HepG2 (cell line): ENCODE measurements at regions of chr9 and their contacts with region 1.

Region 1: DNA sequence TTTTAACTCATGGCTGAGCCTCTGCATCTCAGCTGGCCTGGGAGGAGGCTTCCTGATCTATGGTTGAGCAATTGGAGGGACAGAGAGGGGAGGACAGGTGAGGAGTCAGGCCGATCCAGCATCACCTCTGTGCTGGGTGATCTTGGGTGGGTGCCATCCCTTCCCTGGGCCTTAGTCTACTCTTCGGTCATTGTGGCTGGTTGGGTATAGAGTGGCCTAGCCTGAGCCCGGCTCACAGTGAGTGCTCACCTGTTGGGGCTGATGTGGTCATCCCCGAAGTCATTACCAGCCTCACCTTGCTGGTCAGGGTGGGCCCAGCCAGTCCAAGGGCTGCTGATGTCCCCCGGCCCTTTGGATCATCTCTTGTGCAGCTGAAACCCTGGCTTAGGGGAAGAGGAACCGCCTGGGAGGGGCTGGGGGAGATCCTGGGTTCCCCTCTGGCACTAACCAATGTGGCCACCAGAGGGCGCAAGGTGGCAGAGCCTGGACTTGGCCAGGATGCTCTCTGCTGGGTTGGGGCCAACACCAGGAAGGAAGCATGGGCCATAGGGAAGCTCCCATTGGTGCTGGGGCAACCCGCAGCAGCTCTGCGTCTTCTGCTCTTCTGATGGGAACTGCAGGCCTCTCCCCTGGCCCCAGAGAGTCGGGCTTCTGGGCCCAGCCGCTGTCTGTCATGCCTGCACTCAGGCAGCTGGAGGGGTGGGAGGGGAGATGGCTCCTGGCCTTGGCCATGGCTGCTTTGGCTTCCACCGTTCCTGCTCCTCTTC is 17.3 kb upstream of the ODF2 start:
- DNase-seq: peak; percentile 68
- ATAC-seq: peak; percentile 96
- H3K4me3 ChIP-seq: peak overlapping the region in 1 of 3 experiments; percentile 45; a peak in 1 of 6 replicates
- H3K27ac ChIP-seq: no peak overlapping the region
- H3K4me1 ChIP-seq: peaks cover 9% of the 10 kb centered on the region; the same call in 1 of the 2 replicates
- H3K27me3 ChIP-seq: peaks cover 0 to 6% of the 10 kb centered on the region in 2 experiments; a peak in 2 of 5 replicates
- CTCF ChIP-seq: peak; percentile 97
- EP300 ChIP-seq: no peak
- POLR2A ChIP-seq: no peak
- RAD21 ChIP-seq: peak; percentile 80

Region 2: DNA sequence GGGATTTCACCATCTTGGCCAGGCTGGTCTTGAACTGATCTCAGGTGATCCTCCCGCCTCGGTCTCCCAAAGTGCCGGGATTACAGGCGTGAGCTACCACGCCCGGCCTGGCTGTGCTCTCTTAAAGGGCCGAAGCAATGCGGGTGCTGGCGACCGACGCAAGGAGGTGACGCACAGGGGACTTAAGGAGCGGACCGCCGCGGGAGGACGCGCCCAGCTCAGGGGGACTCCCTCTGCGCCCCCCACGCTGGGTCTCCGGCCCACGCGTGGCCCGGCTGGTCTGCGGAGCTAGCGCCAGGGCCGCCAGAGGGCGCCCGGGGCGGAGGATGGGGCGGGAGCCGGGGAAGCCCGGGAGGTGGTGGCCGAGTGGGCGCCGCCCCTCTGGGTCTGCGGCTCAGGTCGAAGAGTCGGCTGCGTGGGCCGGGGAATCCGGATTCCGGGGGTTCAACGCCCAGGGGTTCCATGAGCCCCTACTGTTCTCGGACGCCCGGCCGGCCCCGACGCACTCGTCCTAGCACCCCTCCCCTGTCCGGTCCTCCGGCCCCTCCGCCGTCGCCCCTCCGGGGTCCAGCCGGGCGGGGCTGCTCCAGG is 18.4 kb before region 1 on chr9:
- CTCF ChIA-PET with region 1: no interaction called
- POLR2A ChIA-PET with region 1: interaction called, 3 read pairs
- in situ Hi-C with region 1: no loop called
- intact Hi-C with region 1: loop called (anchors 2 kb)
- DNase-seq: peak; percentile 39
- ATAC-seq: peak; percentile 84
- H3K4me3 ChIP-seq: peak overlapping the region; percentile 85 to 92 (median 91)
- H3K27ac ChIP-seq: no peak overlapping the region
- H3K4me1 ChIP-seq: peaks cover 26% of the 10 kb centered on the region
- H3K27me3 ChIP-seq: peaks cover 4 to 8% of the 10 kb centered on the region in 2 experiments; a peak in 3 of 5 replicates
- CTCF ChIP-seq: peak; percentile 88
- EP300 ChIP-seq: no peak
- POLR2A ChIP-seq: no peak
- RAD21 ChIP-seq: peak; percentile 35; the same call in 1 of the 2 replicates

Region 3: GRCh38 chr9:128558431-128559310 is 120.1 kb after region 1 on chr9:
- CTCF ChIA-PET with region 1: no interaction called
- POLR2A ChIA-PET with region 1: no interaction called
- in situ Hi-C with region 1: no loop called
- intact Hi-C with region 1: loop called (anchors 5 kb)
- DNase-seq: peak; percentile 53
- ATAC-seq: peak; percentile 74
- H3K4me3 ChIP-seq: no peak overlapping the region; a peak in 1 of 6 replicates
- H3K27ac ChIP-seq: no peak overlapping the region
- H3K4me1 ChIP-seq: peaks cover 60% of the 10 kb centered on the region
- H3K27me3 ChIP-seq: no peaks in the 10 kb centered on the region
- CTCF ChIP-seq: no peak
- EP300 ChIP-seq: 0 out of 4 replicates have a peak, but pooled peaks of 1 of the 2 experiments have one; percentile 9
- POLR2A ChIP-seq: no peak
- RAD21 ChIP-seq: no peak